ENCODE measurements at regions of chr5 and their contacts with region 1.

Region 1: GRCh38 chr5:135977375-135977928 is 22.7 kb upstream of the LECT2 start:
- DNase-seq: peak; percentile 58 to 76 (median 66)
- ATAC-seq: peak; percentile 100
- H3K4me3 ChIP-seq: no peak overlapping the region
- H3K27ac ChIP-seq: no peak overlapping the region
- H3K4me1 ChIP-seq: peaks cover 0 to 4% of the 10 kb centered on the region in 2 experiments; a peak in 2 of 5 replicates
- H3K27me3 ChIP-seq: peaks cover 0 to 13% of the 10 kb centered on the region in 2 experiments; a peak in 4 of 5 replicates
- CTCF ChIP-seq: peak; percentile 84 to 95 (median 90)
- EP300 ChIP-seq: no peak
- POLR2A ChIP-seq: no peak
- RAD21 ChIP-seq: peak; percentile 57 to 81

Region 2: DNA sequence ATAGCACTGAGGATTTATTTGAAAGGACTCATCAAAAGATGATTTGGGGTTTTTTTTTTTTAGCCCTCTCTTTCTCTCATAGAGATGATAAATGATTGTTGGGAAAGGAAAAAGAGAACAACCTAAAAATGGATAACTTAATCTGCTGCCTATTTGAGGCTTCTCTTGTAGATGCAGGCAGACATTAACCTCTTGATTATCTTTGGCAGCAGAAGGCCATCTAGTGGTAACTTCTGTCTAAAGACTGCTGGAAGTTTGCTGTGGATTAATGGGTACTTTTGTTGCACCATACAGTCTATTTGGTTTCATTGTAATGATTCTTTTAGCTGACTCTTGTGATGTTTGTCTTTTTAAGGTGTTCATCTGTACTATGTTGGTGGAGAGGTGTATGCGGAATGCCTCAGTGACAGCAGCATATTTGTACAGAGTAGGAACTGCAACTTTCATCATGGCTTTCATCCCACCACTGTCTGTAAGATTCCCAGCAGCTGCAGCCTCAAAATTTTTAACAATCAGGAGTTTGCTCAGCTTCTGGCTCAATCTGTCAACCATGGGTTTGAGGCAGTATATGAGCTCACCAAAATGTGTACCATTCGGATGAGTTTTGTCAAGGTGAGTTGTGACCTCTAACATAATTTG is 196.7 kb after region 1 on chr5:
- CTCF ChIA-PET with region 1: no interaction called
- POLR2A ChIA-PET with region 1: no interaction called
- in situ Hi-C with region 1: no loop called
- intact Hi-C with region 1: loop called (anchors 10 kb)
- DNase-seq: peak; percentile 36 to 71 (median 52)
- ATAC-seq: peak; percentile 90
- H3K4me3 ChIP-seq: no peak overlapping the region
- H3K27ac ChIP-seq: no peak overlapping the region
- H3K4me1 ChIP-seq: 0 out of 5 replicates have a peak, but pooled peaks cover 0 to 2% of the 10 kb centered on the region in 2 experiments
- H3K27me3 ChIP-seq: no peaks in the 10 kb centered on the region
- CTCF ChIP-seq: peak; percentile 48 to 83 (median 62); a peak in 5 of 6 replicates
- EP300 ChIP-seq: no peak
- POLR2A ChIP-seq: no peak
- RAD21 ChIP-seq: peak; percentile 88 to 93

Region 3: DNA sequence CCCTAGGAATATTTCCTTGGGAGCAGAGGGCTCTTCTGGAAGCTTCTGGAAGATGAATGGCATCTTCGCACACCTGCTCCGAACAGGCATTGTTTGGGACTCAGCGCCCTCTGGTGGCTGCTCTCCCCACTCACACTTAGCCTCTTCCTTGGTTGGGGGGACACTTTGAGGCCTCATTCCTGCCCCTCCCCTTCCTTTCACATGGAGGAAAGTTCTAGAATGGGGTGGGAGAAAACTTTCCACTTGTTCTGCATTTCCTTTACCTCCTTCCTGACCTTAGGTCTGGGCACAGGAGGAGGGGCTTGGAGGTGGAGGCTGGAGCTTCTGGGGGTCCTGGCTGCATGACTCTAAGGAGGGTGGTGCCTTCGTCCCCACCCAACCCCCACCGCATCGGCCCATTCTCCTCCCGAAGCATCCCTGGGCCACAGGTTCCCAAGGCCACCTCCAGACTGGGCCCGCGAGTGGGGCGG is 234.8 kb after region 1 on chr5:
- CTCF ChIA-PET with region 1: no interaction called
- POLR2A ChIA-PET with region 1: no interaction called
- in situ Hi-C with region 1: no loop called
- intact Hi-C with region 1: loop called (anchors 1 kb)
- DNase-seq: peak; percentile 70 to 84 (median 80)
- ATAC-seq: peak; percentile 92
- H3K4me3 ChIP-seq: no peak overlapping the region
- H3K27ac ChIP-seq: no peak overlapping the region
- H3K4me1 ChIP-seq: peaks cover 0 to 2% of the 10 kb centered on the region in 2 experiments; a peak in 1 of 5 replicates
- H3K27me3 ChIP-seq: peaks cover 15 to 77% of the 10 kb centered on the region in 2 experiments; a peak in 4 of 5 replicates
- CTCF ChIP-seq: peak; percentile 80 to 91 (median 89)
- EP300 ChIP-seq: peak; percentile 19; the same call in 1 of the 2 replicates
- POLR2A ChIP-seq: no peak
- RAD21 ChIP-seq: peak; percentile 84 to 93